HepG2 (cell line): ENCODE measurements at regions of chr11 and their contacts with region 1.

Region 1: DNA sequence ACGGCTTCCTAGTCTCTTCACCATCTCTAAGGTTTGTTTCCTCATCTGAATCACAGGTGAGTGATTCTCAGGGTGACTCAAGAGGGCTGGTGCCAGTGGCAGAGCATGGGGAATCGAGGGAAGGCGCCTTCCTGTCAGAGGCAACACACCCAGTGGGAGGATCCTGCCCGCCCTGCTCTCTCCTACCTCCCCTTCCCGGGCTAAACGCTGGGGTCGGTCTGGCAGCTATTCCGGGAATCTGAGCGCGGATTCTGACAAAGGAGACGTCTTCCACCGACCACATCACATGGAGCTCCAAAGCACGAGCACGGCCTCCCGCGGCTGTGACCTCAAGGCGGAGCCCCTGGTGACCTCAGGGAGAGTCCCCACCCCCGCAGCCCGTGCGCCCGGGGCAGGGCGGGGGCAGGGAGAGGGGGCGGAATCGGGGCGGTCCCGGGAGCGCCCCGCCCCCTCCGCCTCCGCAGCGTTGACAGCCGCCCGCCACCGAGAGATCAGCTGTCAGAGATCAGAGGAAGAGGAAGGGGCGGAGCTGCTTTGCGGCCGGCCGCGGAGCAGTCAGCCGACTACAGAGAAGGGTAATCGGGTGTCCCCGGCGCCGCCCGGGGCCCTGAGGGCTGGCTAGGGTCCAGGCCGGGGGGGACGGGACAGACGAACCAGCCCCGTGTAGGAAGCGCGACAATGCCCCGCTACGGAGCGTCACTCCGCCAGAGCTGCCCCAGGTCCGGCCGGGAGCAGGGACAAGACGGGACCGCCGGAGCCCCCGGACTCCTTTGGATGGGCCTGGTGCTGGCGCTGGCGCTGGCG is at the start of gene SMPD1:
- DNase-seq: peak; percentile 74
- ATAC-seq: peak; percentile 91
- H3K4me3 ChIP-seq: peak within 1 kb of the TSS; percentile 68 to 81 (median 78)
- H3K27ac ChIP-seq: no peak within 1 kb of the TSS
- H3K4me1 ChIP-seq: peaks cover 36% of the 10 kb centered on the region
- H3K27me3 ChIP-seq: no peaks in the 10 kb centered on the region; a peak in 3 of 5 replicates
- CTCF ChIP-seq: no peak
- EP300 ChIP-seq: no peak
- POLR2A ChIP-seq: peak in 1 of 2 experiments; percentile 37; a peak in 1 of 4 replicates
- RAD21 ChIP-seq: 0 out of 2 replicates have a peak, but pooled peaks have one; percentile 20
- total RNA-seq, gene SMPD1: 5.3 and 8.4 TPM in 2 replicates

Region 2: GRCh38 chr11:6142936-6143335 is 247.2 kb before region 1 on chr11:
- CTCF ChIA-PET with region 1: no interaction called
- POLR2A ChIA-PET with region 1: no interaction called
- in situ Hi-C with region 1: no loop called
- intact Hi-C with region 1: no loop called
- DNase-seq: no peak
- ATAC-seq: no peak
- H3K4me3 ChIP-seq: no peak overlapping the region
- H3K27ac ChIP-seq: no peak overlapping the region
- H3K4me1 ChIP-seq: no peaks in the 10 kb centered on the region
- H3K27me3 ChIP-seq: no peaks in the 10 kb centered on the region; a peak in 1 of 5 replicates
- CTCF ChIP-seq: no peak
- EP300 ChIP-seq: no peak
- POLR2A ChIP-seq: no peak
- RAD21 ChIP-seq: no peak

Region 3: GRCh38 chr11:6377902-6378639 is 12.1 kb before region 1 on chr11:
- CTCF ChIA-PET with region 1: interaction called, 3 read pairs
- POLR2A ChIA-PET with region 1: interaction called, 11 read pairs
- in situ Hi-C with region 1: no loop called
- intact Hi-C with region 1: no loop called
- DNase-seq: no peak
- ATAC-seq: no peak
- H3K4me3 ChIP-seq: no peak overlapping the region
- H3K27ac ChIP-seq: no peak overlapping the region
- H3K4me1 ChIP-seq: no peaks in the 10 kb centered on the region
- H3K27me3 ChIP-seq: peaks cover 1 to 8% of the 10 kb centered on the region in 2 experiments; a peak in 2 of 5 replicates
- CTCF ChIP-seq: no peak
- EP300 ChIP-seq: no peak
- POLR2A ChIP-seq: no peak
- RAD21 ChIP-seq: no peak

Region 4: GRCh38 chr11:6419009-6419631 is 29.0 kb after region 1 on chr11 and contains the start of gene APBB1:
- CTCF ChIA-PET with region 1: no interaction called
- POLR2A ChIA-PET with region 1: interaction called, 15 read pairs
- in situ Hi-C with region 1: no loop called
- intact Hi-C with region 1: no loop called
- DNase-seq: no peak
- ATAC-seq: peak; percentile 81
- H3K4me3 ChIP-seq: peak within 1 kb of the TSS; percentile 77 to 90 (median 82)
- H3K27ac ChIP-seq: no peak within 1 kb of the TSS
- H3K4me1 ChIP-seq: peaks cover 12% of the 10 kb centered on the region
- H3K27me3 ChIP-seq: peaks cover 0 to 30% of the 10 kb centered on the region in 2 experiments; a peak in 3 of 5 replicates
- CTCF ChIP-seq: no peak
- EP300 ChIP-seq: no peak
- POLR2A ChIP-seq: no peak
- RAD21 ChIP-seq: no peak
- total RNA-seq, gene APBB1: 2.4 and 3.5 TPM in 2 replicates

Region 5: DNA sequence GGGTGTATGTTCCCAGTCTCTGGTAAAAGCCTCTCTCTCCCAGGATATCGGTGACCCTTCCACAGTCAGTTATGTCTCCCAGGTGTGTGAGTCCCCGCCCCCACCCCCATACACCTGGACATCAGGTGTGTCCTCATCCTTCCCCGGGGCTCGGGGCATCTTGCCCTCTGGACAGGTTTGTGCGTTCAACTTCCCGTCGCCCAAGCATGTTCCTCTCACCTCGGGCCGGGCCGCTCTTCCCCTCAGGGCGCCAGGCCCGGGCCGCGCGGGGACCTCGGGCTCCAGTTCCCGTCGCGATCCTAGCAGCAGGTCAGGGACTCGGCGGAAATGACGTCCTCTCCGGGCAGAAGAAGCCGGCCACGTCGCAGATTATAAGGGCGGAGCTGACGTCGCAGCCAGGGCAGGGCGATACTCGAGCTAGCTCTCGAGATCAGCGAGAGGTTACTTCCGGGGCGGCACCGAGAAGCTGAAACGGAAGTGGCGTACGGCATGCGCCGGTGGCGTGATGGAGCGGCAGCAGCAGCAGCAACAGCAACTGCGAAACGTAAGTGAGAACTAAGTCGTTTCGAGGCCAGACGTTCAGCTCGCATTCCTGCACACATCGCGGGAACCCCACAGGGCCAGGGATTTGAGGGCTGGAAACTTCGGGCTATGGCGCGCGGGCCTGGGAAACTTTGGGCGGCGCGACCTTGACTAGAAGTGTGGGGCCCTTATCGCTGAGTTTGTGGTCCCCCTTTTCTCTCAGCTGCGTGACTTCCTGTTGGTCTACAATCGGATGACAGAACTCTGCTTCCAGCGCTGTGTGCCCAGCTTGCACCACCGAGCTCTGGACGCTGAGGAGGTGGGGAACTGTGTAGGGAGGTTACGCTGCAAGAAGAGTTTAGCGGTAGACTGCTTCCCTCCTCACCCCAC is 91.1 kb after region 1 on chr11 and contains the starts of genes ARFIP2 and TIMM10B:
- CTCF ChIA-PET with region 1: no interaction called
- POLR2A ChIA-PET with region 1: interaction called, 8 read pairs
- in situ Hi-C with region 1: no loop called
- intact Hi-C with region 1: loop called (anchors 5 kb)
- DNase-seq: peak; percentile 96
- ATAC-seq: peak; percentile 96
- H3K4me3 ChIP-seq: peak within 1 kb of the TSS; percentile 86 to 92 (median 86)
- H3K27ac ChIP-seq: peak within 1 kb of the TSS; percentile 95
- H3K4me1 ChIP-seq: peaks cover 56% of the 10 kb centered on the region
- H3K27me3 ChIP-seq: no peaks in the 10 kb centered on the region; a peak in 1 of 5 replicates
- CTCF ChIP-seq: no peak; the same call in 1 of the 2 replicates
- EP300 ChIP-seq: peak in 1 of 2 experiments; percentile 43; a peak in 1 of 4 replicates
- POLR2A ChIP-seq: peak; percentile 94 to 98
- RAD21 ChIP-seq: 0 out of 2 replicates have a peak, but pooled peaks have one; percentile 9
- total RNA-seq, gene ARFIP2: 58.9 and 60.2 TPM in 2 replicates
- total RNA-seq, gene TIMM10B: 39.5 and 60.1 TPM in 2 replicates

Region 6: DNA sequence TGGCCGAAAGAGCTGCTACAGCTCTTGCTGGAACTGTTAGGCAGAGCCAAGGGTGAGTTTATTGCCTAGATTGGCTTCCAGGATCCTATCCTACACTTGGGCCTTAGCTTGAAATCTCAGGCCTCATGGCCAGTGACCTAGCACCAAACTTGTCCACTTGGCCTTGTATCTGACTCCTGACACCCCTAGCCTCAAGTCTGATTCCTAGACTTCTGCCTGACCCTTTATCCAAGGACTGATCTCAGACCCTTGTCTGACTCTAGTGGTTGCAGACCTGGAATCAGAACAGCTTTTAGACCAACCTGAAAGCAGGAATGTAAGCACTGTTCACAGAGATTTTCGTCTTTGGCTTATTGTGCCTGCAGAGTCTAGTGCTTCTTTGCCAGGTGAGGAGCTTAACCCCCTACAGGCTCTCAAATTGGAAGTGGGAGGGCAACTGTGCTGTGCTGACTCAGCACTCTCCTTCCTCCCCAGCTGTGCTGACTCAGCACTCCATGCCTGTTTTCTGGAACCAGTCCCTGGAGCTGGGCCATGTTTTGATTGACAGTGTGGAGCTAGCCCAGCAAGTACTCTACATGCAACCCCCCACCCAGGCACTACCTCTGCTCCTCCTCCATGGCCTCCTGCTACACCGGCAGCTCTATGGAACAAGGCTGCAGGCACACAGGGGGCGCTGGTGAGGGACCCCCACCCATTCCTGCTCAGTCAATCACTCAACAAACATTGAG is 178.2 kb after region 1 on chr11:
- CTCF ChIA-PET with region 1: no interaction called
- POLR2A ChIA-PET with region 1: no interaction called
- in situ Hi-C with region 1: no loop called
- intact Hi-C with region 1: no loop called
- DNase-seq: no peak
- ATAC-seq: no peak
- H3K4me3 ChIP-seq: no peak overlapping the region
- H3K27ac ChIP-seq: no peak overlapping the region
- H3K4me1 ChIP-seq: no peaks in the 10 kb centered on the region
- H3K27me3 ChIP-seq: no peaks in the 10 kb centered on the region
- CTCF ChIP-seq: peak; percentile 20; the same call in 1 of the 2 replicates
- EP300 ChIP-seq: no peak
- POLR2A ChIP-seq: no peak
- RAD21 ChIP-seq: no peak

Region 7: DNA sequence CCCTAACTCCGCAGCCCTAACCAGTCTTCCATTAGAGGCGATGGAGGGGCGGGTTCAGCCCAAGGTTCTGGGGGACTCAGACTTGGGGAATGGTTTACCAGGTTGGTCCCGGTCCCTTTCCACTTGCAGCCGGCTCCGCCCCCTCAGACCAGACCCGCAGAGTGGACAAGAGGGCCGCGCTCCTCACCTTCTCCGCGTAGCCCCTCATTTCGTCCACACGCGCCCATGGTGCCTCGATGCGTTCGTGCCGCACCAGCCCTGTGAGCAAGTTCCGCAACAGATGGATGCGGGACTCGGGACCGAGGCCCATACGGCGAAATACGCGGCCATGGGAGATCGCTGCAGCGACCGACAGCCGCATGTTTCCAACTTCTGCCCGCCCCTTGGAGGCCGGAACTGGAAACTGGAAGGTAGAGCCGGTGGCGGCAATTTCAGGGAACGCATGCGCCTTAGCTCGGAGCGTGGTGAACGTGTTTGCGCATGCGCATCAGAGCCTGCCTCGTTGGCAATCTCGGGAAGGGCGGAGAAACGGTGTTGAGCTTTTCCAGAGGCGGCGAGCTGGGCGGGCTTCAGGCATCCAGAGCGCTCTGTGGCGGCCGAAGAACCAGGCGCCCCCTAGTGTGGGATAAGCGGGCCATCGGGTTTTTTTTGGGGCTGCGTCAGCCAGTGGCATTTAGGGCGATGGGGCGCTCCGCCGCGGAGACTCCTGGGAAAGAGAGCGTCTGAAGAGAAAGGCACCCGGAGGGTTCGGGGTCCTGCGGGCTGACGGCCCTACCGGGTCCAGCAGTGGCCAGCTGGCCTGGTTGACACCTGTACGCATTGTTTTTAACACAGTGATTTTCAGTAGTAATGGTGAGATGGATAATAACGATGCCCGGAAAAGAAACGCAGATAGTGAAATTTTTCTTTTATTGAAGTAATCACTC is 293.1 kb after region 1 on chr11 and contains the start of gene MRPL17:
- CTCF ChIA-PET with region 1: no interaction called
- POLR2A ChIA-PET with region 1: interaction called, 5 read pairs
- in situ Hi-C with region 1: no loop called
- intact Hi-C with region 1: loop called (anchors 10 kb)
- DNase-seq: peak; percentile 98
- ATAC-seq: peak; percentile 94
- H3K4me3 ChIP-seq: peak within 1 kb of the TSS; percentile 63 to 81 (median 66)
- H3K27ac ChIP-seq: peak within 1 kb of the TSS; percentile 77
- H3K4me1 ChIP-seq: peaks cover 18% of the 10 kb centered on the region
- H3K27me3 ChIP-seq: peaks cover 0 to 9% of the 10 kb centered on the region in 2 experiments; a peak in 2 of 5 replicates
- CTCF ChIP-seq: peak; percentile 93
- EP300 ChIP-seq: peak; percentile 17 to 27; a peak in 1 of 4 replicates
- POLR2A ChIP-seq: peak; percentile 97 to 98
- RAD21 ChIP-seq: peak; percentile 83
- total RNA-seq, gene MRPL17: 90.0 and 97.9 TPM in 2 replicates

Region 8: DNA sequence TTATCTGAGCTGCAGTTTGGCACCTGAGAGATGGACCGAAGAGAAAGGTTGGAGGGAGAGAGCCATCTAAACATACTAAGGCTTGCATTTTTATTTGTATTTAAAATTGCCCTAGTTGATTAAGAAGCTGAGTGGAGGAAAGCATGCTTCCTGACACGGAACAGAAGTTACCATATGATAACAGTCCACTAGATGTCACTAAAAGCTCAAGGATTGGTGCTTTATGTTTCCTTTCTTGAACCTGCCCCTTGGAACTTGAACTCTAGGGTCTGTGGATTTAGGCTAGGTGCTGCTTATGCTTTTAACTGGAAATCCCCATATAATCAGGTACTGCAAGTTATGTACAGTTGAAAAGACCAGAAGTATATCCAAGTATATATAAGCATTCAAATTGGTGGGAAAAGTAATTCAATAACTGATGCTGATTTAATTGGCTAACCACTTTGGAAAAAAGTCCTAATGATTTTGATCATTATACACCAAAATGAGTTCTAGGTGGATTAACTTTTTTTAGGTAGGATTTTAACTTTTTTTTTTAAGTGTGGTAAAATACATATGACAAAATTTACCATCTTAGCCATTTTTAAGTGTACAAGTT is 708.2 kb after region 1 on chr11:
- CTCF ChIA-PET with region 1: no interaction called
- POLR2A ChIA-PET with region 1: no interaction called
- in situ Hi-C with region 1: no loop called
- intact Hi-C with region 1: no loop called
- DNase-seq: peak; percentile 49
- ATAC-seq: peak; percentile 81
- H3K4me3 ChIP-seq: no peak overlapping the region
- H3K27ac ChIP-seq: no peak overlapping the region
- H3K4me1 ChIP-seq: no peaks in the 10 kb centered on the region
- H3K27me3 ChIP-seq: no peaks in the 10 kb centered on the region
- CTCF ChIP-seq: peak; percentile 82
- EP300 ChIP-seq: no peak
- POLR2A ChIP-seq: no peak
- RAD21 ChIP-seq: peak; percentile 65; the same call in 1 of the 2 replicates